Right lobe of liver (tissue), 6 donors: ENCODE measurements at regions of chr19 and their contacts with region 1.

Region 1: GRCh38 chr19:5031231-5032100 is 62.6 kb downstream of the KDM4B start:
- DNase-seq: peak; percentile 81 to 86 (median 83)
- ATAC-seq: peak; percentile 88 to 95 (median 90)
- H3K4me3 ChIP-seq: no peak overlapping the region
- H3K27ac ChIP-seq: no peak overlapping the region
- H3K4me1 ChIP-seq: no peaks in the 10 kb centered on the region
- H3K27me3 ChIP-seq: no peaks in the 10 kb centered on the region
- CTCF ChIP-seq: peak; percentile 88 to 95 (median 94)
- POLR2A ChIP-seq: no peak

Region 2: GRCh38 chr19:4870025-4870700 is 161.3 kb before region 1 on chr19:
- intact Hi-C with region 1: loop called (anchors 5 kb)
- DNase-seq: peak in 1 of 3 donors; percentile 57
- ATAC-seq: peak in 2 of 4 donors; percentile 11 to 48
- H3K4me3 ChIP-seq: no peak overlapping the region
- H3K27ac ChIP-seq: no peak overlapping the region
- H3K4me1 ChIP-seq: peaks cover 0 to 8% (median 0%) of the 10 kb centered on the region in 4 donors
- H3K27me3 ChIP-seq: no peaks in the 10 kb centered on the region
- CTCF ChIP-seq: no peak
- POLR2A ChIP-seq: no peak

Region 3: DNA sequence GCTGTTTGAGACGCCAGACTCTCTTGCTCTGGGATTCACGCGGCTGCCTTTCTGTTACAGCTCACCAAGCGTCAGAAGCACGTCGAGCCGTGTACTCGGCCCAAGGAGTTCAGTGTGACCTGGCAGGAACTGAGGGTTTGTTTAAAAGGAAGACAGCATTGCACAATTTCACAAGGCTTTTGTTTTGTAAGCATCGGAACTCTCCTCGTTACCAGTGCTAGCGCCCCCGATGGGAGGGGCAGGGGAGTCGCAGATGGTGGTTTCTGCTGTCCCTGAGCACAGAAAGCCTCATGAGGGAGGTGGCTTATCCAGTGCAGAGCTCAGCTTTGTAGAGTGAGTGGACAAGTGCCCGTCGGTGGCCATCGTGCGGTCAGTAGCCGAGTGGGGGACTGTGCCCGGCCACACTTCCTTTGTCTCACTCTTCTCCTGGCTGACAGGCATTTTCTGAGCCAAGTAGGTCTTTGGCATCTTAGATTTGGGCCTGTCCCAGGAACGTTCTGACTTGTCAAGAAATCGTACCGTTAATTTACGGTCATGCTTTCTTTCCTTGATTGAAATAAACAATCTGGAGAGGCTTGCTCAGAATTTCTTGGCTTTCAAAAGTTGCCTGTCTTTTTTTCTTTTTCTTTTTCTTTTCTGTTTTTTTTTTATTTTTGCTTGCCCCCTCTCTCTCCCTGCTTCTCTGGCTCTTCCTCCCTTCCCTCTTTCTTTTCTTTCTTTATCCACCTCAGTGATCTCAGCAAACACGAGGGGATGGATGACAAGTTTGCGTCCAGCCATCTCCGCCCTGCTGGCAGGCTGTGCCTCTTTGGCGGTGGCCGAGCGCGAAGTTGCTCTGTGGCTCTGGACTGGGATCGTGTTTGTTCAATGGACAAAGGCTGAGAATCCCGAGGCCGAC is 54.8 kb before region 1 on chr19:
- intact Hi-C with region 1: loop called in 1 of 2 experiments (anchors 10 kb)
- DNase-seq: peak; percentile 67 to 80 (median 67)
- ATAC-seq: peak; percentile 56 to 72 (median 64)
- H3K4me3 ChIP-seq: no peak overlapping the region
- H3K27ac ChIP-seq: peak overlapping the region; percentile 50 to 71 (median 70)
- H3K4me1 ChIP-seq: peaks cover 0 to 73% (median 26%) of the 10 kb centered on the region in 4 donors
- H3K27me3 ChIP-seq: no peaks in the 10 kb centered on the region
- CTCF ChIP-seq: peak in 3 of 4 donors; percentile 30 to 40 (median 40)
- POLR2A ChIP-seq: peak; percentile 28

Region 4: GRCh38 chr19:5313307-5313706 is 281.8 kb after region 1 on chr19:
- intact Hi-C with region 1: no loop called
- DNase-seq: no peak
- ATAC-seq: peak in 1 of 4 donors; percentile 21
- H3K4me3 ChIP-seq: no peak overlapping the region
- H3K27ac ChIP-seq: no peak overlapping the region
- H3K4me1 ChIP-seq: no peaks in the 10 kb centered on the region
- H3K27me3 ChIP-seq: no peaks in the 10 kb centered on the region
- CTCF ChIP-seq: no peak
- POLR2A ChIP-seq: no peak